ENCODE measurements at regions of chr22 and their contacts with region 1.

Region 1: DNA sequence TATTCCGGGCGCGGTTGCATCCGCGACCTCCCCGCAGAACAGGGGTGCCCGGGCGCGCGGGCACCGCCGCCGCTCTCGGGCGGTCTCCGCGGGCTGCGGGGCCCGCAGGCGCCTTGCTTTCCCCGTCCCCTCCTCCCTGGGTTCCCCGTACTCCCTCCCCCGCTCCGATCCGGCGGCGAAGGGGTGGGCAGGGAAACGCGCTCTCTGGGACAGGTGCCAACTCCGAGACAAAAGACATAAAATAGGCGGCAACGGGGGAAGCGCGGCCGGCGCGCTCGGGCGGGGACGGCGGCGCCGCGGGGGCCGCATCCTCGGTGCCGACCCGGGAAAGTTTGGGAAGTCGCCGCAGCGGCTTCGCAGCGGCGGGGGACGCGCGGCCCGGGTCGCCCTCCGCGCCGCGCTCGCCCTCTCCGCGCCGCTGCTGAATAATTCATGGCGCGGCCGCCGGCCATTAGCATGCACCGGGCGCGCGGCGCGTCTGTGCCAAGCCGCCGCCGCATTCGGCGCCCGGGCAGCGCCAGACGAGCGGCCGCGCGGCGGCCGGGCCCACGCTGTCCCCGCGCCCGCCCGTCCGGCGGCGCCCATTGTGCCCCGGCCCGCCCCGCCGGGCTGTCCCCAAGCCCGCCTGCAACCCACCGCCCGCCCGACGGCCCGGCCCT is 78.7 kb upstream of the PPARA start:
- DNase-seq: peak; percentile 96
- H3K4me3 Mint-ChIP-seq: peak overlapping the region; percentile 96
- H3K27ac Mint-ChIP-seq: peak overlapping the region; percentile 100
- H3K4me1 Mint-ChIP-seq: peaks cover 24% of the 10 kb centered on the region
- H3K27me3 Mint-ChIP-seq: no peaks in the 10 kb centered on the region
- CTCF ChIP-seq: no peak

Region 2: GRCh38 chr22:46044621-46045438 is 26.8 kb before region 1 on chr22:
- CTCF ChIA-PET with region 1: interaction called, 3 read pairs
- POLR2A ChIA-PET with region 1: interaction called, 1,278 read pairs
- intact Hi-C with region 1: no loop called
- DNase-seq: no peak
- H3K4me3 Mint-ChIP-seq: peak overlapping the region; percentile 79
- H3K27ac Mint-ChIP-seq: peak overlapping the region; percentile 97
- H3K4me1 Mint-ChIP-seq: peaks cover 14% of the 10 kb centered on the region
- H3K27me3 Mint-ChIP-seq: no peaks in the 10 kb centered on the region
- CTCF ChIP-seq: no peak

Region 3: DNA sequence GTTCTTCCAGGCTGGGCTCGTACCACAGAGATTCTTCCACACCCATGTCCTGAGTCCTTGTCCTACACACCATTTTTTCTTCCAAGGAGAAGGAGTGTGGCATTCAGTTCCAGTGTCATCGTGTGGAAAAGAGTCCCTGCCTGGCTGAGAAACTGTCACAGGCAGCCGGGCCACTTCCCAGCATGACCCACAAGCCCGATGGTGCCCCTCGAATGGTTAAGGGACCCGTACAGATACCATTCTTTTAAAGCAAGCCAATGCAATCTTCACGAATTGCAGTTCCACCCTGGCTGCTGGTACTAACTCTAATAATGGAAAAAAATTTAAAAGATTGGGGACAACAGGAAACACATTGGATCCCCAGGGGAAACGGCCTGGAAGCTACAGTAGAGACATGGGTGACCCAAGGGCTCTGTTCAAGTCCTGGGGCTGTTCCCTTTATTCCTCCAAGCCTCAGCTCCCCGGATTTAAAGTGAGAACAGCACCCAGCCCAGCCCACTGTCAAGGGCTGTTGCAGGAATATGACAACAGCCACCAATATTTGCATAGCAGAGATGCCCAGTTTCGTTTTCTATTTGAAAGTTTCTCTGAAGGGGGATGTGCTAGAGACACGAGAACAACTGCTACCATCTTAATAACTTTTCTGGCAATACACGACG is 13.7 kb before region 1 on chr22:
- CTCF ChIA-PET with region 1: interaction called, 9 read pairs
- POLR2A ChIA-PET with region 1: interaction called, 1,278 read pairs
- intact Hi-C with region 1: no loop called
- DNase-seq: peak; percentile 87
- H3K4me3 Mint-ChIP-seq: peak overlapping the region; percentile 81
- H3K27ac Mint-ChIP-seq: peak overlapping the region; percentile 98
- H3K4me1 Mint-ChIP-seq: peaks cover 33% of the 10 kb centered on the region
- H3K27me3 Mint-ChIP-seq: no peaks in the 10 kb centered on the region
- CTCF ChIP-seq: no peak

Region 4: GRCh38 chr22:46108564-46109473 is 37.2 kb after region 1 on chr22:
- CTCF ChIA-PET with region 1: interaction called, 3 read pairs
- POLR2A ChIA-PET with region 1: interaction called, 21 read pairs
- intact Hi-C with region 1: loop called (anchors 5 kb)
- DNase-seq: peak; percentile 72
- H3K4me3 Mint-ChIP-seq: peak overlapping the region; percentile 12
- H3K27ac Mint-ChIP-seq: peak overlapping the region; percentile 93
- H3K4me1 Mint-ChIP-seq: peaks cover 34% of the 10 kb centered on the region
- H3K27me3 Mint-ChIP-seq: no peaks in the 10 kb centered on the region
- CTCF ChIP-seq: peak; percentile 7